ENCODE measurements at regions of chr12 and their contacts with region 1.

Region 1: DNA sequence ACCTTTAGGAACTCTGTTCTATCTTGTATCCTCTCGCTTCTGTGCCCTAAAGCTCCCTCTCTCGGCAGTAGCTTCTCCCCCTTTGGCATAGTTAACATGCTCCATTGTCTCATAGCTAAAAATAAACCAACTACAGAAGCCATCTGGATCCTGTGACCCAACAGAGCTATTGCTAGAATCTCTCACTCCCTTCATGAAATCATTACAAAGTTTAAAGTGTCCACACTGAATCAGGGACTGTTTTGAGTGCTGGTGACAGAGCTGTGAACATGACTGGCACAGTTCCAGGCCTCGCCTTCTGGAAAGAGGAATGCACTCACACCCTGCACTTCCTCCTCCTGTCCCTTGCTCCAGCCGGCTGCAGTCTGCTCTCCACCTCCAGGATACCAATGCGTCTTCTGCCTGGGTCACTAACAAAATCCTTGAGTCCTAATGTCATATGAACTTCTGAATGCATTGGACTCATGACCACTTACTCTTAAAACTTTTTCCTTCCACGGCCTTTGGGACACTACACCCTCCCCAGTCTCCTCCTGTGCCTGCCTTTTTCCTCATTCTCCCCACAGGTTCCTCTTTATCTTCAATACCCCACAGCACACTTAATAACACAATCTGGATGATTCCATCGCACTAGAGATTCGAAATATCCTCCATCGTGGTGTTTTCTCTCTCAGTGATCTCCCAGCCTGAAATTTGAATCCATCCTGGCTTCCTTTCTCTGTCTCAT is 13.2 kb downstream of the PLBD1 start:
- DNase-seq: no peak
- ATAC-seq: no peak
- H3K4me3 ChIP-seq: no peak overlapping the region
- H3K27ac ChIP-seq: no peak overlapping the region
- H3K4me1 ChIP-seq: no peaks in the 10 kb centered on the region
- H3K27me3 ChIP-seq: no peaks in the 10 kb centered on the region
- CTCF ChIP-seq: no peak

Region 2: GRCh38 chr12:14278294-14278953 is 276.0 kb before region 1 on chr12:
- CTCF ChIA-PET with region 1: interaction called, 10 read pairs
- POLR2A ChIA-PET with region 1: no interaction called
- in situ Hi-C with region 1: no loop called
- intact Hi-C with region 1: no loop called
- DNase-seq: no peak
- ATAC-seq: no peak
- H3K4me3 ChIP-seq: no peak overlapping the region
- H3K27ac ChIP-seq: no peak overlapping the region
- H3K4me1 ChIP-seq: no peaks in the 10 kb centered on the region; the same call in 1 of the 2 replicates
- H3K27me3 ChIP-seq: no peaks in the 10 kb centered on the region
- CTCF ChIP-seq: no peak

Measured in Panc1 (cell line).